CD8-positive, alpha-beta T cell (primary cell): ENCODE measurements at regions of chr1 and their contacts with region 1.

Region 1: GRCh38 chr1:227734856-227735538 is at the starts of genes JMJD4 and SNAP47:
- DNase-seq: peak; percentile 82 to 97 (median 92)
- ATAC-seq: peak; percentile 89
- H3K4me3 ChIP-seq: peak within 1 kb of the TSS; percentile 71 to 95
- H3K4me3 Mint-ChIP-seq: peak within 1 kb of the TSS; percentile 89
- H3K27ac ChIP-seq: peak within 1 kb of the TSS; percentile 71 to 76
- H3K27ac Mint-ChIP-seq: peak within 1 kb of the TSS; percentile 88
- H3K4me1 ChIP-seq: peaks cover 19% of the 10 kb centered on the region
- H3K4me1 Mint-ChIP-seq: peaks cover 51% of the 10 kb centered on the region
- H3K27me3 ChIP-seq: no peaks in the 10 kb centered on the region
- H3K27me3 Mint-ChIP-seq: no peaks in the 10 kb centered on the region
- CTCF ChIP-seq: no peak
- total RNA-seq, gene JMJD4: 7.4 to 9.5 TPM
- total RNA-seq, gene SNAP47: 11.0 to 13.8 TPM

Region 2: DNA sequence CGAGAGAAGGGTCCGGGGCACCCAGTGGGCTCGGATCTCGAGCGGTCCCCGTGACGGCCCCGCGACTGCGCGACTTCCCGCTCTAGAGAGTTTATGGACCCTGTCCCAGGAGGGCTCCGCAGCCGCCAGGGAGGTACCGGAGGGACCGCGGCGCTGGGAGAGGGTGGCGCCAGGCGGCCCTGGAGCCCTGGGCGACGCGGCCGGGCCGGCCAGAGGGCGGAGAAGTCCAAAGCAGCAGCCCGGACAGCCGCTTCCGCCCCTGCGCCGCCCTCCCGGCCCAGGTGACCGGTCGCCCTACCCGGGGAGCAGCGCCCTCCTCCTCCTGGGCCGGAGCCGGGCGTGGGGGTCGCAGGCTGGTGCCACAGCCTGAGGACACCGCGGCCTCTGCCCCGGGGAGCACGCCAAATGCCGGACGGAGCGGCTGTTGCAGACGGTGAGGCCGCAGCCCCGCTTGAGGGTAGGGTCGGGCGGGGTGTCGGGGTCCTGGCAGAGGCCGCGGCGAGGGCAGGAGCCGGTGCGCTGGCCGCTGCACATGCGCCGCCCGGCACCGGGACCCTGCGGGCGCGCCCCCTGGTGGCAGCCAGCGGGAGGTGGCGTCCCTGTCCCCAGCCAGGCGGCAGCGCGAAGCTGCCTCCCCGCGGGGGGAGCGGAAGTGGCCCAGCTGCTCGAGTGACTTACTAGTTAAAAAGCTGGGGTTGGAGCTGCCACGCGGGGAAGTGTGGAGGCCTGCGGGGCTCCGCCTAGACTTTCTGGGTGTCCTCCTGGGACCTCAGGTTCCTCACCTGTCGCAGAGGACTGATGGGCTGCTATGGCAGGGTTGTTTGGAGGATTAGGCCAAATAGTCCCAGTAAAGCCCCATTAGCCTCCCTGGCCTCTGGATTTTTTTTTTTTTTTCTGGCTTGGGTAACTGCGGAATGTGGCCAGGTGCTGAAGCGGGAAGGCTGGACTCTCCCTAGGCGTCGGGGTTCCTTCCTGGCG is 192.6 kb before region 1 on chr1:
- CTCF ChIA-PET with region 1: no interaction called
- POLR2A ChIA-PET with region 1: no interaction called
- intact Hi-C with region 1: loop called (anchors 2 to 5 kb)
- DNase-seq: peak; percentile 74 to 94 (median 90)
- ATAC-seq: peak; percentile 98
- H3K4me3 ChIP-seq: peak overlapping the region; percentile 43 to 61
- H3K4me3 Mint-ChIP-seq: peak overlapping the region; percentile 64
- H3K27ac ChIP-seq: peak overlapping the region in 1 of 2 experiments; percentile 57
- H3K27ac Mint-ChIP-seq: no peak overlapping the region
- H3K4me1 ChIP-seq: peaks cover 11% of the 10 kb centered on the region
- H3K4me1 Mint-ChIP-seq: peaks cover 5% of the 10 kb centered on the region
- H3K27me3 ChIP-seq: no peaks in the 10 kb centered on the region
- H3K27me3 Mint-ChIP-seq: no peaks in the 10 kb centered on the region
- CTCF ChIP-seq: peak; percentile 93

Region 3: GRCh38 chr1:227864882-227865281 is 129.9 kb after region 1 on chr1:
- CTCF ChIA-PET with region 1: no interaction called
- POLR2A ChIA-PET with region 1: no interaction called
- intact Hi-C with region 1: no loop called
- DNase-seq: no peak
- ATAC-seq: no peak
- H3K4me3 ChIP-seq: no peak overlapping the region
- H3K4me3 Mint-ChIP-seq: no peak overlapping the region
- H3K27ac ChIP-seq: no peak overlapping the region
- H3K27ac Mint-ChIP-seq: no peak overlapping the region
- H3K4me1 ChIP-seq: peaks cover 8% of the 10 kb centered on the region
- H3K4me1 Mint-ChIP-seq: peaks cover 16% of the 10 kb centered on the region
- H3K27me3 ChIP-seq: no peaks in the 10 kb centered on the region
- H3K27me3 Mint-ChIP-seq: no peaks in the 10 kb centered on the region
- CTCF ChIP-seq: no peak

Region 4: DNA sequence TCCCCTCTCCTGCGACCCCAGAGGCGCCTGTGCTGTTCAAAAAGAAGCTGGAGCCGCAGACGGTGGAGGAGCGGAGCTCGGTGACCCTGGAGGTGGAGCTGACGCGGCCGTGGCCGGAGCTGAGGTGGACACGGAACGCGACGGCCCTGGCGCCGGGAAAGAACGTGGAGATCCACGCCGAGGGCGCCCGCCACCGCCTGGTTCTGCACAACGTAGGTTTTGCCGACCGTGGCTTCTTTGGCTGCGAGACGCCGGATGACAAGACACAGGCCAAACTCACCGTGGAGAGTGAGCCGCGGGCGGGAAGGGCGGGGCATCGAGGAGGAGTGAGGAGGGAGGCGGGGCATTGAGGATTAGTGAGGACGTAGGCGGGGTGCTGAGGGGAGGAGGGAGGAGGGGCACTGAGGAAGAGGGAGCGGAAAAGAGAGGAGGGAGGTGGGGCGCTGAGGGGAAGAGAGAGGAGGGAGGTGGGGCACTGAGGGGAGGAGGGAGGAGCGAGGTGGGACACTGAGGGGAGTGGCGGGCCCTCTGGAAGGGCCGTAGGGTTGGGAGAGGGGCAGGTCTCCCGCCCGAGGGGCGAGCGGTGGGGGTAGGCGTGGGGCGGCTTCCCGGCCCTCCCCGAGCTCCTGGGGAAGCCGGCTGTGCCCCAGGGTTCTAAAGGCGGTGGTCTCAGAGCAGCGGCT is 540.9 kb after region 1 on chr1:
- CTCF ChIA-PET with region 1: no interaction called
- POLR2A ChIA-PET with region 1: no interaction called
- intact Hi-C with region 1: loop called in 1 of 2 experiments (anchors 10 kb)
- DNase-seq: peak; percentile 74 to 95 (median 92)
- ATAC-seq: peak; percentile 96
- H3K4me3 ChIP-seq: peak overlapping the region; percentile 75 to 81
- H3K4me3 Mint-ChIP-seq: peak overlapping the region; percentile 80
- H3K27ac ChIP-seq: peak overlapping the region; percentile 31 to 39
- H3K27ac Mint-ChIP-seq: peak overlapping the region; percentile 18
- H3K4me1 ChIP-seq: peaks cover 6% of the 10 kb centered on the region
- H3K4me1 Mint-ChIP-seq: peaks cover 12% of the 10 kb centered on the region
- H3K27me3 ChIP-seq: no peaks in the 10 kb centered on the region
- H3K27me3 Mint-ChIP-seq: no peaks in the 10 kb centered on the region
- CTCF ChIP-seq: no peak